ENCODE measurements at regions of chr12 and their contacts with region 1.

Region 1: GRCh38 chr12:46952880-46953517 is 126.4 kb upstream of the PCED1B start:
- DNase-seq: no peak
- ATAC-seq: no peak
- H3K4me3 ChIP-seq: no peak overlapping the region
- H3K4me3 Mint-ChIP-seq: no peak overlapping the region
- H3K27ac ChIP-seq: no peak overlapping the region
- H3K27ac Mint-ChIP-seq: no peak overlapping the region
- H3K4me1 ChIP-seq: no peaks in the 10 kb centered on the region
- H3K4me1 Mint-ChIP-seq: no peaks in the 10 kb centered on the region
- H3K27me3 ChIP-seq: peaks cover 0 to 5% of the 10 kb centered on the region in 2 experiments
- H3K27me3 Mint-ChIP-seq: peaks cover 6 to 10% of the 10 kb centered on the region in 2 donors

Region 2: GRCh38 chr12:46963977-46964971 is 11.3 kb after region 1 on chr12:
- CTCF ChIA-PET with region 1: no interaction called
- POLR2A ChIA-PET with region 1: interaction called in 1 of 2 experiments, 10 read pairs
- DNase-seq: no peak
- ATAC-seq: no peak
- H3K4me3 ChIP-seq: no peak overlapping the region
- H3K4me3 Mint-ChIP-seq: no peak overlapping the region
- H3K27ac ChIP-seq: no peak overlapping the region
- H3K27ac Mint-ChIP-seq: no peak overlapping the region
- H3K4me1 ChIP-seq: no peaks in the 10 kb centered on the region
- H3K4me1 Mint-ChIP-seq: no peaks in the 10 kb centered on the region
- H3K27me3 ChIP-seq: peaks cover 0 to 5% of the 10 kb centered on the region in 2 experiments
- H3K27me3 Mint-ChIP-seq: peaks cover 3 to 10% of the 10 kb centered on the region in 2 donors

Region 3: GRCh38 chr12:47160316-47161244 is 207.6 kb after region 1 on chr12:
- CTCF ChIA-PET with region 1: no interaction called
- POLR2A ChIA-PET with region 1: interaction called in 1 of 2 experiments, 15 read pairs
- DNase-seq: no peak
- ATAC-seq: no peak
- H3K4me3 ChIP-seq: no peak overlapping the region
- H3K4me3 Mint-ChIP-seq: no peak overlapping the region
- H3K27ac ChIP-seq: no peak overlapping the region
- H3K27ac Mint-ChIP-seq: peak overlapping the region in 1 of 2 donors; percentile 41
- H3K4me1 ChIP-seq: peaks cover 12 to 13% of the 10 kb centered on the region in 2 experiments
- H3K4me1 Mint-ChIP-seq: peaks cover 38 to 45% (median 40%) of the 10 kb centered on the region in 3 donors
- H3K27me3 ChIP-seq: no peaks in the 10 kb centered on the region
- H3K27me3 Mint-ChIP-seq: no peaks in the 10 kb centered on the region